ENCODE measurements at regions of chr3 and their contacts with region 1.

Region 1: DNA sequence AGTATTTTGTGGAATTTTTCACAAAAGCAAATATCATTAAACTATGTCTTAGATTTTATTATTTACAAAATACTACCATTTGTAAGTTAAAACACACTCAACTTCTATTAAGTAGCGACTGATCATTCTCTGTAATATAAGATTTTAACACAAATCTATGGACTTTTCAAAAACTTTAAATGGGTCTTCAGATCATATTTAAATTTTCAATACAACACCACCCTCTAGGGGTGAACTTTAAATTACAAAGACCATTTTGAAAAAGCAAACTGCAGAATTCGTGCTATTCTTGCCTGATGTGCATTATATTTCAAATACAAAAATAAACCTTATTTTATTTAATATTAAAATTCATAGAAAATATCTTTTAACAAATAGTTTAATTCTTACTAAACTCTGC is 8.2 kb upstream of the VGLL4 start:
- DNase-seq: no peak
- ATAC-seq: no peak
- H3K4me3 Mint-ChIP-seq: no peak overlapping the region
- H3K27ac Mint-ChIP-seq: no peak overlapping the region
- H3K4me1 Mint-ChIP-seq: peaks cover 8% of the 10 kb centered on the region
- H3K27me3 Mint-ChIP-seq: no peaks in the 10 kb centered on the region

Region 2: GRCh38 chr3:10945683-10946287 is 706.1 kb before region 1 on chr3:
- CTCF ChIA-PET with region 1: interaction called, 3 read pairs
- POLR2A ChIA-PET with region 1: no interaction called
- intact Hi-C with region 1: loop called in 1 of 2 experiments (anchors 5 kb)
- DNase-seq: peak; percentile 79
- ATAC-seq: peak; percentile 83
- H3K4me3 Mint-ChIP-seq: no peak overlapping the region
- H3K27ac Mint-ChIP-seq: no peak overlapping the region
- H3K4me1 Mint-ChIP-seq: no peaks in the 10 kb centered on the region
- H3K27me3 Mint-ChIP-seq: peaks cover 5% of the 10 kb centered on the region

Region 3: DNA sequence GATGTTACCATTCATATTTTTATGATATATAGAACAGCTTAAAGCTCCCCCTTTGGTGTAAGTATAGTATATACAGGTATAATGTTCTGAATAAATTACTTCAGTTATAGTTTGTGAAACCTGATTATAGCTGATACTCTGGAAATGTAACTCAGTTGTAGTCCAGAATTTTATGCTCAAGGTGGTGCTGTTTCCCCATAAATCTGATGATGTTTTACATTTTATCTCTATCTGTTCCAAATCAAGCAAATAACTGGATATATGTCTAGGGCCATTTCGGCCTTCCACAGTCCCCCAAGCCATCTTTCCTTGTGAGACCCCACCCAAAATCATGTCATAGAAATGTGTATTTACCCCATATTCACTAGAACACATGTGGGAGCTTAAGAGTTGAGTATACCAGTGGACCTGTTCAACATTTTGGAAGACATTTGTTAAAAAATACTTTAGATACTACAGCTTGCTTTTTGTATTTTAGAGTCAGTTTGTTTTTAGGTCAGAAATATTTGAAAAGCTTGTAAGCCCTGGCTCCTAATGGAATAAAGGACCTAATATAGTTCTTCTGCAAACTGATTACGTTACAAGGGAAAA is 272.6 kb before region 1 on chr3:
- CTCF ChIA-PET with region 1: interaction called, 50 read pairs
- POLR2A ChIA-PET with region 1: no interaction called
- intact Hi-C with region 1: loop called (anchors 1 to 2 kb)
- DNase-seq: no peak
- ATAC-seq: no peak
- H3K4me3 Mint-ChIP-seq: no peak overlapping the region
- H3K27ac Mint-ChIP-seq: no peak overlapping the region
- H3K4me1 Mint-ChIP-seq: no peaks in the 10 kb centered on the region
- H3K27me3 Mint-ChIP-seq: no peaks in the 10 kb centered on the region

Region 4: GRCh38 chr3:11626084-11626463 is 25.8 kb before region 1 on chr3:
- CTCF ChIA-PET with region 1: interaction called, 13 read pairs
- POLR2A ChIA-PET with region 1: no interaction called
- intact Hi-C with region 1: no loop called
- DNase-seq: peak; percentile 44
- ATAC-seq: peak; percentile 67
- H3K4me3 Mint-ChIP-seq: peak overlapping the region; percentile 26
- H3K27ac Mint-ChIP-seq: peak overlapping the region; percentile 66
- H3K4me1 Mint-ChIP-seq: peaks cover 67% of the 10 kb centered on the region
- H3K27me3 Mint-ChIP-seq: no peaks in the 10 kb centered on the region

Region 5: DNA sequence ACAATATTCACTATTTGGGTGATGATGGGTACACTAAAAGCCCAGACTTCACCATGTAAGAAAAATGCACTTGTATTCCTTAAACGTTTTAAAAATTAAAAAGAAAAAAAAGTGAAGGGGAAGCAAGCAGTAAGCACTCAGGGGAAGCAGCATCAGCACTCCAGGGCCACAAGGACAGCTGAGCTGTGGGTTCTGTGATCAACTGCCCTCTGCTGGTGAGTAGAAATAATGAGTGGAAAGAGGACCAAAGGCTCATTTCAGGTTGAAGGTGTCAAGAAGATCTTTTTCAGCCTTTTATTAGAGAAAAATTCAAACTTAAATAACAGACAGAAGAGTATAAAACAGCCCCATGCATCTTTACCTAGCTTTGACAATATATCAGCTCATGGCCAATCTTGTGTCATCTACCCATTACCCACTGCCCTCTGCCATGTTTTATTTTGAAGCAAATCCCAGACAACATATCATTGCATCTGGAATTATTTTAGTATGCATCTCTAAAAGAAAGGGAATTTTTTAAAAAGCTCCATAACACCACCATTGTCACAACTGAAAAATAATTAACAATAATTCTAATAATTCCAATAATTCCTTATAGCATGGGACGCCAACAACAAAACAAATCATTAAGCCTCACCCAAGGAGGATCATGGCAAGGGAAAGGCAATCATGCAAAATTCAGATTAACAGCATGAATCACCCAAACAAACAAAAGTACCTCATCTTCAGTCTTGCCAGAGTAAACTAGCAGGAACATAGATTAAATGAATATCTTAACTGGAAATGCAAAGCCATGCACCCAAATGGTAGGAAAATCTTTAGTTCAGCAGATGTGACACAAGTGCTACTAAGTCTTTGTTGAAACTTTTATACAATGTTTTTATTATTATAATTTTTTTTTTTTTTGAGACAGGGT is 152.3 kb after region 1 on chr3:
- CTCF ChIA-PET with region 1: interaction called, 3 read pairs
- POLR2A ChIA-PET with region 1: no interaction called
- intact Hi-C with region 1: loop called (anchors 5 to 10 kb)
- DNase-seq: peak; percentile 56
- ATAC-seq: peak; percentile 80
- H3K4me3 Mint-ChIP-seq: no peak overlapping the region
- H3K27ac Mint-ChIP-seq: no peak overlapping the region
- H3K4me1 Mint-ChIP-seq: peaks cover 5% of the 10 kb centered on the region
- H3K27me3 Mint-ChIP-seq: no peaks in the 10 kb centered on the region

Measured in activated CD4-positive, alpha-beta T cell treated with anti-CD3 and anti-CD28 coated beads for 36 hours (primary cell).